ENCODE measurements at regions of chr1 and their contacts with region 1.

Region 1: GRCh38 chr1:169794530-169795416 is at the start of gene METTL18:
- DNase-seq: peak; percentile 97
- H3K4me3 Mint-ChIP-seq: peak within 1 kb of the TSS; percentile 99
- H3K27ac Mint-ChIP-seq: peak within 1 kb of the TSS; percentile 99
- H3K4me1 Mint-ChIP-seq: peaks cover 48% of the 10 kb centered on the region
- H3K27me3 Mint-ChIP-seq: no peaks in the 10 kb centered on the region
- total RNA-seq, gene METTL18: 10.6 to 11.1 TPM

Region 2: GRCh38 chr1:169044296-169044695 is 750.5 kb before region 1 on chr1:
- CTCF ChIA-PET with region 1: no interaction called
- intact Hi-C with region 1: loop called (anchors 5 kb)
- DNase-seq: peak; percentile 68
- H3K4me3 Mint-ChIP-seq: no peak overlapping the region
- H3K27ac Mint-ChIP-seq: peak overlapping the region; percentile 66
- H3K4me1 Mint-ChIP-seq: peaks cover 63% of the 10 kb centered on the region
- H3K27me3 Mint-ChIP-seq: no peaks in the 10 kb centered on the region

Region 3: DNA sequence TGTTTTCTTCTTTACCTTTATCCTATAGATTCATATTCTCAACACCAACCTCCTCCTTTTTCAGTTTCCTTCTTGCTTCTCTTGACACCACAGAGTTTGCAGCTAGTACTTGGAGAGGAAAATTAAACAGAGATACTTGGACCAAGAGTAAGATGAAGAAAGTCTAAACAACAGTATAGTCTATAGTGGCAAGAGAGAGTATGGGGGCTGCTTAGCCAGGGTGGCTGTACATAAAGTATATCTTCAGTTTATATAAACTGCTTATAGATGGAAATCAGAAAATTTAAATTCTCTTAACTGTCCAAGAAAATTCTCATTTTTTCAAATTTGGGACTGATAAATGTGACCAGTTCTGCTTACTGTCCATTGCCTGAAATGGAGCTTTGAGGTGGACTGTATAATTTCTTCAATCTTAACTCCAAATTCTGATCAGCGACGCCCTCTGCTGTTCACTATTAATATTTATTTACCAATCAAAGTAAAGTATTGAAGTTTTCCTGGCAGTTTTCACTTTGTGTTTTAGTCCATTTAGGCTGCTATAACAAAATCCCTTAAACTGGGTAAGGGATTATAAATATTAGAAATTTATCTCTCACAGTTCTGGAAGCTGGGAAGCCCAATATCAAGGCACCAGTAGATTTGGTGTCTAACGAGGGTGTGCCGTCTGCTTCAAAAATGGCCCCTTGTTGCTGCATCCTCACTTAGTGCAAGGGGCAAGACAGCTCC is 14.8 kb after region 1 on chr1:
- CTCF ChIA-PET with region 1: interaction called, 14 read pairs
- intact Hi-C with region 1: no loop called
- DNase-seq: peak; percentile 10
- H3K4me3 Mint-ChIP-seq: no peak overlapping the region
- H3K27ac Mint-ChIP-seq: no peak overlapping the region
- H3K4me1 Mint-ChIP-seq: no peaks in the 10 kb centered on the region
- H3K27me3 Mint-ChIP-seq: no peaks in the 10 kb centered on the region

Measured in activated naive CD4-positive, alpha-beta T cell treated with anti-CD3 and anti-CD28 coated beads for 36 hours (primary cell).